CD4-positive, alpha-beta memory T cell (primary cell): ENCODE measurements at regions of chr1 and their contacts with region 1.

Region 1: DNA sequence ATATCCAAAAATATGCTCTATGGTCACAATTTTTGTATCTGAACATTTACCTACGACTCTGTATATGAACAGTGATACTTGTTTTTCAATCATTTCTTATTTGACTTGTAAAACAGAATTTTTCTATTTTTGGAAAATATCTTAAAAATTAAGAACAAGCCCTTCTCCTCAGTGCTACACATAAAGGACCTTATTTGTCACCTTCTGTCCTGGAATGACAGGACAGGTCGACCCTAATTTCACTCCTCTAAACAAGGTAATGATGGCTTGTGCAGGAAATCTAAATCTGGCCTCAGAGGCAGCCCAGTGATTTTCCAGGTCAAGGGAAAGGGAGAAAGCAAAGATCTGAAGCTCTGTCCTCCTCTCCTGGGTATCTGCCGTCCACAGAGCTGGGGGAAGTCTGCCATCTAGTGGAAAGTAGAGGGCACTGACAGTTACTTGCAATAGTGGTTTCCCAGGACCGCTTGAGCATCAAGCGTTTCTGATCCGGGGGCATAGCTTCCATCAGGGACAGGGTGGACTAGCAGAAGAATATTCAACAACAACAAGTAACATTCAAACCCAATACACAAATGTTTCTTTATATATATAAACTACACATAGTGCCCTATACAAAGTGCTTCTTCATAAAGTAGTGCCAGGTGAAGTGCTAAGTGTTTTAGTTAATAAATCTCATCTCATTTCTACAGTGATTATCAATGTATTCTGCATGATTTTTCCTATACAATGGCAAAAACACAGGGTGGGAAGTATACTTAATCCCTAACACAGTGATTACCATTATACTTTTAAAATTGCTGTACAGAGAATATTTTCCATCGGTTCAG is 74.6 kb downstream of the SLC25A24 start:
- DNase-seq: peak; percentile 53 to 72 (median 67)
- H3K4me3 ChIP-seq: no peak overlapping the region
- H3K4me3 Mint-ChIP-seq: no peak overlapping the region
- H3K27ac ChIP-seq: no peak overlapping the region
- H3K27ac Mint-ChIP-seq: peak overlapping the region in 1 of 7 donors; percentile 18
- H3K4me1 ChIP-seq: no peaks in the 10 kb centered on the region
- H3K4me1 Mint-ChIP-seq: peaks cover 0 to 6% (median 5%) of the 10 kb centered on the region in 4 donors
- H3K27me3 ChIP-seq: no peaks in the 10 kb centered on the region
- H3K27me3 Mint-ChIP-seq: peaks cover 0 to 2% of the 10 kb centered on the region in 2 donors

Region 2: GRCh38 chr1:107795994-107796393 is 329.5 kb before region 1 on chr1:
- CTCF ChIA-PET with region 1: interaction called, 614 read pairs
- POLR2A ChIA-PET with region 1: no interaction called
- intact Hi-C with region 1: no loop called
- DNase-seq: peak in 1 of 5 donors; percentile 19
- H3K4me3 ChIP-seq: no peak overlapping the region
- H3K4me3 Mint-ChIP-seq: no peak overlapping the region
- H3K27ac ChIP-seq: no peak overlapping the region
- H3K27ac Mint-ChIP-seq: peak overlapping the region in 1 of 7 donors; percentile 81
- H3K4me1 ChIP-seq: no peaks in the 10 kb centered on the region
- H3K4me1 Mint-ChIP-seq: peaks cover 0 to 11% (median 7%) of the 10 kb centered on the region in 4 donors
- H3K27me3 ChIP-seq: no peaks in the 10 kb centered on the region
- H3K27me3 Mint-ChIP-seq: no peaks in the 10 kb centered on the region

Region 3: DNA sequence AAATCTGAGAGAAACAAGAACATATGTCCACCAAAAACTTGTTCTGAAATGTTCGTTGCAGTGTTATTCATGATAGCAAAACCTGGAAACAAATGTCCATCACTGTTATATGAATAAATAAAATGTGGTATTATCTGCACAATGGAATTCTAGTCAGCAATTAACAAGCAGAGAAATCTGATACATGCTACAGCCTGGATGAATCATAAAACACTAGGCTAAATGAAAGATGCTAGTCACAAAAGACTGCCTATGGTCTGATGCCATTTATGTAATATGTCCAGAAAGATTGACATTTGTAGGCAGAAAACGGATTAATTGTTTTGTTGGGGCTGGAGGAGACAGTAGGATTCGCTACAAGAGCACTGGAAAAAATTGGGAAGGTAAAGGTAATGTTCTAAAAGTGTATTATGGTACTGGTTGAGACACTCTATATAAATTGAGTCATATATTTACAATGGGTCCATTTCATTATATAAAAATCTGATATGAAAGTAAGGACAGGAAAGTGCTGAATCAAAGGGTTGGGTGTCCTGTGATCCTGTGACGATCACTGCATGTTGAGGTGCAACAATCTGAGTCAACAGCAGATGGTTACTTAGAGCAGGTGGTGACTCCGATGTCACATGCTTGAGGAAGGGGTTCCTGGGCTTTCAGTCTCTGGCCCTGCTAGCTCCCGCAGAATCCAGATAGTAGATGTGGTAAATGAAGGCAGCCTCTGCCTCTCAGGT is 220.4 kb after region 1 on chr1:
- CTCF ChIA-PET with region 1: no interaction called
- POLR2A ChIA-PET with region 1: no interaction called
- intact Hi-C with region 1: no loop called
- DNase-seq: no peak
- H3K4me3 ChIP-seq: no peak overlapping the region
- H3K4me3 Mint-ChIP-seq: no peak overlapping the region
- H3K27ac ChIP-seq: no peak overlapping the region
- H3K27ac Mint-ChIP-seq: peak overlapping the region in 1 of 7 donors; percentile 17
- H3K4me1 ChIP-seq: no peaks in the 10 kb centered on the region
- H3K4me1 Mint-ChIP-seq: no peaks in the 10 kb centered on the region
- H3K27me3 ChIP-seq: no peaks in the 10 kb centered on the region
- H3K27me3 Mint-ChIP-seq: peaks cover 3 to 10% of the 10 kb centered on the region in 2 donors